ENCODE measurements at regions of chr3 and their contacts with region 1.

Region 1: GRCh38 chr3:123158330-123158729 is 43.4 kb upstream of the SEC22A start:
- DNase-seq: no peak
- ATAC-seq: no peak
- H3K4me3 ChIP-seq: no peak overlapping the region
- H3K27ac ChIP-seq: peak overlapping the region; percentile 48
- H3K4me1 ChIP-seq: peaks cover 26% of the 10 kb centered on the region
- H3K27me3 ChIP-seq: no peaks in the 10 kb centered on the region
- CTCF ChIP-seq: no peak
- EP300 ChIP-seq: no peak
- POLR2A ChIP-seq: no peak
- RAD21 ChIP-seq: no peak

Region 2: DNA sequence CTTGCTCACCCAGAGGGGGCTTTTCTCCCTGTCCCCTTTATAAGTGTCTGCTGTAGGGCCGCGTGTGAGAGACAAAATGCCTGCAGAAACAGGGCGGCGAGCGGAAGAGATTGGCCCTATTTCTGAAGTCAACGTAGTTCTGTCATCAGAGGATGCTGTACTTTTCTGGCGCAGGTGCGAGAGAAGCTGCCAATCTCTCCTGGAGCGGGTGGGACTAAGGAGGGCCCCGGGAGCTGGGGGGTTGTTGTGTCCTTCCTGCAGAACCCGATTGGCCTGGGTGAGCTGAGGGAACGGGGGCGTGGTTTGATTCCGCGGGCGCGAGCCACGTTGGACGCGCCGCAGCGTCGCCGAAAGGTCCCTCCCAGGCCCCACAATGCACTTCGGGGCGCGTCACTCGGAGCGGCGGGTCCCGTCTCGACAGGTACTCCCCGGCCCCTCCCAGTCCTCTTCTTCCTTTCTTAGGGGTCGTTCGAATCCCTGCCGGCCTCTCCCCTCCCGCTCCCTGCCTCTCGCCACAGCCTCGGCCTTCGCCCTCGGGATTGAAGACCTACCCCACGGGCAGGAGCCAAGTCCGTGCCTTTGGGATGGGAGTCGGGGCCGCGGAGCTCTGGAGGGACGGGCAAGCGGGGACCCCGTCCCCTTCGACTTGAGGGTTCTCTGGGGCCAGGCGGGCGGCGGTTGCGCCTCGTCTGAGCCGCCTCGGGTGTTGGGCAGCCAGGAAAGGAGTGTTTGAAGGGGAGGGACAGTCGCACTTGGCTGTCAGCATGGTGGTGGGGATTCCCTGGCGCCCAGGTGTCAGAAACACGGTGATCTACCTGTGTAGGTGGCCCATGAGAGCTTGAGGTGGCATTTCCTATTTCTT is 43.5 kb after region 1 on chr3 and contains the start of gene SEC22A:
- CTCF ChIA-PET with region 1: no interaction called
- POLR2A ChIA-PET with region 1: interaction called, 15 read pairs
- in situ Hi-C with region 1: no loop called
- intact Hi-C with region 1: no loop called
- DNase-seq: peak; percentile 91
- ATAC-seq: peak; percentile 99
- H3K4me3 ChIP-seq: peak within 1 kb of the TSS; percentile 89 to 99 (median 94)
- H3K27ac ChIP-seq: peak within 1 kb of the TSS; percentile 52
- H3K4me1 ChIP-seq: peaks cover 21% of the 10 kb centered on the region
- H3K27me3 ChIP-seq: no peaks in the 10 kb centered on the region; a peak in 1 of 5 replicates
- CTCF ChIP-seq: no peak
- EP300 ChIP-seq: no peak
- POLR2A ChIP-seq: peak; percentile 67 to 87
- RAD21 ChIP-seq: peak; percentile 5; the same call in 1 of the 2 replicates
- total RNA-seq, gene SEC22A: 17.3 and 20.2 TPM in 2 replicates

Measured in HepG2 (cell line).